Common myeloid progenitor, CD34-positive (primary cell): ENCODE measurements at regions of chr1 and their contacts with region 1.

Region 1: GRCh38 chr1:208211921-208212843 is 32.0 kb downstream of the PLXNA2 start:
- DNase-seq: peak in 1 of 3 donors; percentile 23
- H3K4me3 ChIP-seq: peak overlapping the region in 3 of 7 experiments; percentile 13 to 42 (median 38)
- H3K27ac ChIP-seq: no peak overlapping the region
- H3K4me1 ChIP-seq: peaks cover 0 to 65% (median 20%) of the 10 kb centered on the region in 4 experiments
- H3K27me3 ChIP-seq: no peaks in the 10 kb centered on the region

Region 2: GRCh38 chr1:208118841-208119606 is 93.2 kb before region 1 on chr1:
- CTCF ChIA-PET with region 1: no interaction called
- POLR2A ChIA-PET with region 1: no interaction called
- DNase-seq: no peak
- H3K4me3 ChIP-seq: no peak overlapping the region
- H3K27ac ChIP-seq: no peak overlapping the region
- H3K4me1 ChIP-seq: no peaks in the 10 kb centered on the region
- H3K27me3 ChIP-seq: peaks cover 0 to 2% (median 0%) of the 10 kb centered on the region in 5 experiments

Region 3: GRCh38 chr1:208189183-208189582 is 23.0 kb before region 1 on chr1:
- CTCF ChIA-PET with region 1: no interaction called
- POLR2A ChIA-PET with region 1: no interaction called
- DNase-seq: peak in 2 of 3 donors; percentile 11 to 29
- H3K4me3 ChIP-seq: no peak overlapping the region
- H3K27ac ChIP-seq: no peak overlapping the region
- H3K4me1 ChIP-seq: peaks cover 0 to 21% (median 10%) of the 10 kb centered on the region in 4 experiments
- H3K27me3 ChIP-seq: peaks cover 0 to 1% (median 0%) of the 10 kb centered on the region in 5 experiments

Region 4: DNA sequence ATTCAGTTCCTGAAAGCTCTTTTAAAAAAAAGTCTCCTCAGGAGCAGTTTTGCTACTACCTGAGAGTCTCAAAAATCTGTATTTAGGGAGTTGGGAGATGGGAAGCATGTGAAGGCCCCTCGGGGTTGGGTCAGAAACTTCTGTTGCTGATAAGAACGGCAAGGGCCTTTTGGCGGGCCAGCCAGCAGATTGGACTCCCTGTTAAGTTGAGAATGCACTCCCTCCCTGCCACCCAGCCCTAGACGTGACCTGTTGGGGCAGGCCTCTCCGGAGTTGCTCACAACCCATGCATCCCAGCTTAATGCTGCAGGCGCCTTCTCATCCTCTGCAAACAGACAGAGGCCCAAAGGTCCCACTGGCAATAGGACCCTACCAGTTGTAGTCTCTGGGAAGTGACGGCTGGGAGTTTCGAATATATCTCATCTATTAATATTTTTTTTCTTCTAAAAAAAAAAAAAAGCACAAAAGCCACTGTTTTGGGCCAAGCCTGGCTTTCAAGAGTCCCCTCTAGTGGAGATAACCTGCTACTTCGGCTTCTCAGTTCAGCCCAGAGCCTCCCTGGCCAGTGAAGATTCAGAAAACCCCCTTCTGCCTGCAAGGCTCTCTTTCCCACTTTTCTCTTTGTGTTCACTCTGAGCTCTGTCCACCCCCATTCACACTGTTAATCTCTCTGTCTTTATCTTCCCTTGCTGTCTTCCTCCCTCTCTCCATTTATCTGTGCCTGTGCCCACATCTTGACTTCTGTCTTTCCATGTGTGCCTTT is 26.7 kb after region 1 on chr1:
- CTCF ChIA-PET with region 1: interaction called, 22 read pairs
- POLR2A ChIA-PET with region 1: no interaction called
- DNase-seq: peak; percentile 51 to 74 (median 65)
- H3K4me3 ChIP-seq: no peak overlapping the region
- H3K27ac ChIP-seq: no peak overlapping the region
- H3K4me1 ChIP-seq: peaks cover 7 to 43% (median 30%) of the 10 kb centered on the region in 4 experiments
- H3K27me3 ChIP-seq: peaks cover 2 to 34% (median 18%) of the 10 kb centered on the region in 5 experiments